Mammary epithelial cell (primary cell): ENCODE measurements at regions of chr7 and their contacts with region 1.

Region 1: DNA sequence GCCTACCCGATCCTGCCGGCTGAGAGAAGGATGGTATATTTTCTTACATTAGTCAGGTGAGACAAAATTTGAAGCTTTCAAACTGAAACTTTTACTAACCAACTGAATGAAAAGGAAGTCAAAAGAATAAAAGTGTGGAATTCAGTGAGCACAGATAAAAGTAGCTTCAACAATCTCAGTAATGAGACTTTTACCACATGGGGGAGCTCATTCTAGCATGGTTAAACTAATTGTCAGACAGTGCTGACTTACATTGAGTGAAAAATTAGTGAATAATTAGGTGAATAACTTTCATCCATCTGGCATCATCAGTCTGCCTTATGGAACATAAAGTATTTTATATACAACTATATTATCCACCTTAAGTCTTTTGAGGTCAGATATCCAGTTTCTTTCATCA is 8.4 kb downstream of the FAM237B start:
- DNase-seq: peak; percentile 7
- H3K4me3 ChIP-seq: no peak overlapping the region
- H3K27ac ChIP-seq: no peak overlapping the region
- H3K4me1 ChIP-seq: no peaks in the 10 kb centered on the region
- H3K27me3 ChIP-seq: no peaks in the 10 kb centered on the region
- CTCF ChIP-seq: peak; percentile 34 to 51

Region 2: DNA sequence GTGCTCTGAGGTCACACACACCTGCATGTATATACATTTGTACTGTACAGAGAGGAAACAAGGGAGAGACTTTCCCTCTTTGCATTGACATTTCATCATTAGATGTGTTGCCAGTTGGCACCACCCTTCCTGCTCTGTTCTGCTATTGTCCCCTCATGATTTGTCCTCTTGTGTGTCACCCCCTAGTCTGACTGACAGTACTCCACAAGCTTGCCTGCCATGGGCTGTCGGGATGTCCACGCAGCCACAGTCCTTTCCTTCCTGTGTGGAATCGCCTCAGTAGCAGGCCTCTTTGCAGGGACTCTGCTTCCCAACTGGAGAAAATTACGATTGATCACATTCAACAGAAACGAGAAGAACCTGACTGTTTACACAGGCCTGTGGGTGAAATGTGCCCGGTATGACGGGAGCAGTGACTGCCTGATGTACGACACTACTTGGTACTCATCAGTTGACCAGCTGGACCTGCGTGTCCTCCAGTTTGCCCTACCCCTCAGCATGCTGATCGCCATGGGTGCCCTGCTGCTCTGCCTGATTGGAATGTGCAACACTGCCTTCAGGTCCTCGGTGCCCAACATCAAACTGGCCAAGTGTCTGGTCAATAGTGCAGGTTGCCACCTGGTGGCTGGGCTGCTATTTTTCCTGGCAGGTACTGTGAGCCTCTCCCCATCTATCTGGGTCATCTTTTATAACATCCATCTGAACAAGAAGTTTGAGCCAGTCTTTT is 99.9 kb after region 1 on chr7:
- CTCF ChIA-PET with region 1: no interaction called
- dilution Hi-C with region 1: no loop called
- in situ Hi-C with region 1: loop called in 1 of 2 experiments (anchors 10 kb)
- intact Hi-C with region 1: loop called (anchors 1 kb)
- DNase-seq: peak; percentile 30
- H3K4me3 ChIP-seq: no peak overlapping the region
- H3K27ac ChIP-seq: no peak overlapping the region
- H3K4me1 ChIP-seq: peaks cover 2% of the 10 kb centered on the region
- H3K27me3 ChIP-seq: no peaks in the 10 kb centered on the region
- CTCF ChIP-seq: peak; percentile 44 to 59

Region 3: GRCh38 chr7:90424720-90425119 is 112.0 kb after region 1 on chr7:
- CTCF ChIA-PET with region 1: interaction called, 7 read pairs
- dilution Hi-C with region 1: no loop called
- in situ Hi-C with region 1: loop called in 1 of 2 experiments (anchors 10 kb)
- intact Hi-C with region 1: loop called (anchors 1 kb)
- DNase-seq: no peak
- H3K4me3 ChIP-seq: no peak overlapping the region
- H3K27ac ChIP-seq: no peak overlapping the region
- H3K4me1 ChIP-seq: peaks cover 9% of the 10 kb centered on the region
- H3K27me3 ChIP-seq: no peaks in the 10 kb centered on the region
- CTCF ChIP-seq: no peak

Region 4: DNA sequence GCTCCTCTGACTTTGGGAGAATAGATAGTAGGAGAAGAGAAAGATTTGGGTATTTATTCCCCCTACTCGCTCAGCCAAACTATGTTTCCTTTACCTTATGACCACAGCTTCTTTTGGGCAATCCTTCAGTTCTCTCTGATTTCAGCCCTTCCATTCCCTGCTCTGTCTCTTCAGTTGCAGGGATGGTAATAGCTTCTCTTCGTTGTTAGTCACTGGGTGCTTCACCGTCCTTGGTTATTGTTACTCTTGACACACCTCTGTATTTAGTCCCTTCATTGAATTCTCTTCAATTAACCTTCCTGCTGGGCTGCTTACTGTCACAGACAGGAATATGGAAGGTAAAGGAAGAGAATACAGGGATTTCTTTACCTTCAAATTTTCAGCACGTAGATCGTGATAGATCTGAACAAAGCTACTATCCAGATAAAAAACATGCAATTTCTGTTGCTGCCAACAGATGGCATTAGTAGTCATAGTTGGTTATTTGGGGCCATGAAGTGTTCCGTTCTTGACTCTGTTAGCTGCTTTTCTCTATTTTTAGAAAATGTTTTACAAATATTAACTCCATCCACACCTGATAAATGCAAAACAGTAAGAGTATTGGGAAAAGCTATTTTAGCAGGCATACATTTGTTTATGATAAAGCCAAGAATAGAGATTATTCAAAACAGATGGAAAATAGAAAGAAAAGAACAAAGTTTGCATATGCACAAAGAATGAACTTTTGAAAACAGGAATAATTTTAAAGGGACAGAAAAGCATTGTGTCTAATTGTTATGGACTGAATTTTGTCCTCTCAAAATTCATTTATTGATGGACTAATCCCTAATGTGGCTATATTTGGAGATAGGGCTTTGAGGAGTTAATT is 142.7 kb after region 1 on chr7:
- CTCF ChIA-PET with region 1: no interaction called
- dilution Hi-C with region 1: no loop called
- in situ Hi-C with region 1: no loop called
- intact Hi-C with region 1: no loop called
- DNase-seq: peak; percentile 41
- H3K4me3 ChIP-seq: peak overlapping the region in 1 of 3 experiments; percentile 7
- H3K27ac ChIP-seq: no peak overlapping the region
- H3K4me1 ChIP-seq: no peaks in the 10 kb centered on the region
- H3K27me3 ChIP-seq: no peaks in the 10 kb centered on the region
- CTCF ChIP-seq: peak; percentile 70 to 72